HEK293T (cell line): ENCODE measurements at regions of chr7 and their contacts with region 1.

Region 1: GRCh38 chr7:139133335-139134139 is 24.0 kb upstream of the ZC3HAV1 start:
- DNase-seq: peak; percentile 94

Region 2: DNA sequence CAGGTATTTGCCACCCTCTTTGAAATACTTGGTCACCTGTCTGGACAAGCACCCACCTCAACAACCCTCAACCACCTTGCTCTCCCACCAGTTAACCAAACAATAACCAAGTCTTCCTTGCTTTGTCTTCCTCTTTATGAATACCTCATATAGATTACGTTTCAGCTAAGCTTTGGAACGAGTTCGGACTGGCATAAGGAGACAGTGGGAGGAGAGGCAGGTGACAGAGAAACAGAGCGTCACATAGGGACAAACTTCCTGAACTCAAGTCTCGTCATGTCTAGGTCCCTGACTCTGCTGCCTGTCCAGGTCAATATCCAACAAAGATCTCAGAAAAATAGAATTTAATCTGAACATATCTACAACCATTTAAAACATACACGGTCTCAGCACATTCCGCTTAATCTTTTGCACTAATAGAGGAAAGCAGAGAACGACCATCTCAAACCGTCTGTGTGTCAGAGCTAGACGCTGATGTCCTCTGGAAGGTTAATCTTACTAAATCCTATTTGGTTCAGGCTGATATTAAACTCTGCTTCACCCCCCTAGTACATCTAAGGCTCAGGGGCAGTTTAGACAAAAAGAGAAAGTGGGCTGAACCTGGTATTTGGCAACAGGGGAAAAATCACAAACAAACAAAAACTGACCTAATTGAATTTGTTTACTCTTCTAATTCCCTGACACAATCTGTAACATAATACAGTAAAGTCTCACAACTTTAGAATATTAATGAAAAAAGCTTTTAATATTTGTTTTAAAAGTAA is 406.0 kb before region 1 on chr7:
- CTCF ChIA-PET with region 1: no interaction called
- POLR2A ChIA-PET with region 1: no interaction called
- DNase-seq: no peak

Region 3: DNA sequence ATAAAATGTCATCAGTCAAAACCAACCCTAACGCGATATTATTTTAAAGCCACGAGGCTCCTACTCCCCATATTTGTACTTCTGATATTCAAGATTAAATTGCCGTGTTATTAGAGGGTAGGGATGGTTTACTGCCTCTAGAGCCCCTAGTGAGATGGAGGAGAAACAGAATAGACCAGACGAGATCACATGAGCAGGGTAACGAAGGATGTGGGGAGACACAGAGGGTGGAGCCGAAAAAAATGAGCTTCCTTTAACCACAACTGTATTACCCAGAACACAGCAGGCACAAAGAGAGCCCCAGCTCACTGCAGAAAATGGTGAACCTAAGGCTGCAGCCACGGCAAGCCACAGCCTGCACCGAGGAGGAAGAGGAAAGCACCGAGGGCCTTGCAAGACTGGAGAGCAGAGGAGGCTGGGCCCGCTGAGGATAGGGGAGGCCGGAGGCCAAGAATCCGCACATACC is 38.3 kb before region 1 on chr7:
- CTCF ChIA-PET with region 1: no interaction called
- POLR2A ChIA-PET with region 1: interaction called, 13 read pairs
- DNase-seq: no peak

Region 4: DNA sequence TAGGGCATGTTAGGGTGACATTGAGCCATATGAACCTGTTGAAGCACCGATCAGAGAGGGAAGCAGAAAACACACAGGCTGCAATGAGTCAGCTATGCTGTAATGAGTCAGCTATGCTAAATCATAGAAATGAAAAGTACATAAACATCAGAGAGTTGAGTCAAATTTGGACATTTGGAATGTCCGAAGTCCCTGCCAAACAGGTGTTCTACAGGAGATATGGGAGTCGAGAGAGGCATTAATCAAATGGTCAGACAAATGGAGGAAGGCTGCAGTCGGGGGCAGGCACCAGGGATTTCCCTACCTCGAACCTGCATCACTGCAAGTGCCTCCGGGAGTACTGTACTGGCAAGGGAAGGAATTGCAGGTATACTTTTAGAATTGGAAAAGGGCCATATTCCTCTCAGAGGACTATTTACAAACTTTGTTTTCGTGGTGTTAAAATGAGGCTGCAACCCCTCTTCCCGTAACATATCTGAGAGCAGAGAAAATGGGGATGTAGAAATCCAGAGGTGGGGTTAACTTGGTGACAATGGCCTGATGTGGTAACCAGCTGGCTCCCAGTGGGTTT is 15.2 kb before region 1 on chr7:
- CTCF ChIA-PET with region 1: interaction called, 3 read pairs
- POLR2A ChIA-PET with region 1: interaction called, 28 read pairs
- DNase-seq: peak; percentile 62